ENCODE measurements at regions of chr3 and their contacts with region 1.

Region 1: GRCh38 chr3:49093853-49094767 is at the start of gene QRICH1:
- DNase-seq: peak; percentile 98
- ATAC-seq: peak; percentile 86
- H3K4me3 Mint-ChIP-seq: peak within 1 kb of the TSS; percentile 88
- H3K27ac Mint-ChIP-seq: peak within 1 kb of the TSS; percentile 96
- H3K4me1 Mint-ChIP-seq: peaks cover 28% of the 10 kb centered on the region
- H3K27me3 Mint-ChIP-seq: no peaks in the 10 kb centered on the region
- CTCF ChIP-seq: peak; percentile 63
- total RNA-seq, gene QRICH1: 107 to 112 TPM

Region 2: DNA sequence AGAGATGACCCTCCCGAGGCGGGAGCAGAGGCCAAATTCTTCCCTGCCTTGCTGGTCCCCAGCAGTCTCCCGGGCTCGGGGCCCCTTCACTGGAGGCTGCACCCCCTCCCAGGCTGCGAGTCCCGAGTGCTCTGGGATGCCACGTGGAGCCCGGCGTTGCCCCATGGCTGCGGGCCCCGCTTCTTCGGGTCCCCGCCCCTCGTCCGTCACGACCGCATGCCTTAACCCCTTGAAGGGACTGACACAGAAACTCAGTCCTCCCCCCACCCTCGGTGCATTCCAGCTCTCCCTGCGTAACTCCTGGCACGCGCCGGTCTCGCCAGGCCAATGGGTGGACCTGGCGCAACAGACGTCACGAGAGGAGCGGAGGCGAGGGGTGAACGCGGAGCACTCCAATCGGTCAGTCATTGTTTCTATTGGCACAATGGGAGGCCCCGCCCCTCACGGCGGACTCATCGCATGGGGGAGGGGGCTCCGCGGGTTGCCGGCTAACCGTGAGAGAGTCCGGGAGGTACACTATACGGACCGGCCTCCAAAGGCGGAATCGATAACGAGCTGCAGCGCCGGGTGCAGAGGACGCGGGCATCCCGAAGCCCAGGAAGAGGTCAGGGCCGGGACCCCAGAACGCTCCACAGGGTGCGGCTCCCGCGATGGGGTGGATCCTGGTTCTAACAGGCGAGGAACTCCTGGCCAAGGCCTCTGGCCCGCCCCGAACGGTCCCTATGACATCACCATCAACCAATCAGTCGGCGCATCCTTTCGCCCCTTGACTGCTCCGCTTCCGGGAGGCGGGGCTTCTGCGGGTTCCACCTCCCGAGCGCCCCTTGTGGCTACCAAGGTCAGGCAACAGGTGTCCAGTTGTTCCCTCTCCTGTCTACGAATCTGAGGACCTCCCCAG is 430.4 kb before region 1 on chr3:
- CTCF ChIA-PET with region 1: no interaction called
- POLR2A ChIA-PET with region 1: no interaction called
- intact Hi-C with region 1: no loop called
- DNase-seq: peak; percentile 97
- ATAC-seq: peak; percentile 87
- H3K4me3 Mint-ChIP-seq: peak overlapping the region; percentile 82
- H3K27ac Mint-ChIP-seq: peak overlapping the region; percentile 85
- H3K4me1 Mint-ChIP-seq: peaks cover 17% of the 10 kb centered on the region
- H3K27me3 Mint-ChIP-seq: peaks cover 21% of the 10 kb centered on the region
- CTCF ChIP-seq: peak; percentile 88

Region 3: GRCh38 chr3:49007068-49007770 is 86.9 kb before region 1 on chr3 and contains the start of gene WDR6:
- CTCF ChIA-PET with region 1: interaction called, 11 read pairs
- POLR2A ChIA-PET with region 1: interaction called, 7 read pairs
- intact Hi-C with region 1: no loop called
- DNase-seq: peak; percentile 99
- ATAC-seq: peak; percentile 87
- H3K4me3 Mint-ChIP-seq: peak within 1 kb of the TSS; percentile 91
- H3K27ac Mint-ChIP-seq: peak within 1 kb of the TSS; percentile 98
- H3K4me1 Mint-ChIP-seq: peaks cover 16% of the 10 kb centered on the region
- H3K27me3 Mint-ChIP-seq: no peaks in the 10 kb centered on the region
- CTCF ChIP-seq: no peak
- total RNA-seq, gene WDR6: 111 to 125 TPM

Region 4: DNA sequence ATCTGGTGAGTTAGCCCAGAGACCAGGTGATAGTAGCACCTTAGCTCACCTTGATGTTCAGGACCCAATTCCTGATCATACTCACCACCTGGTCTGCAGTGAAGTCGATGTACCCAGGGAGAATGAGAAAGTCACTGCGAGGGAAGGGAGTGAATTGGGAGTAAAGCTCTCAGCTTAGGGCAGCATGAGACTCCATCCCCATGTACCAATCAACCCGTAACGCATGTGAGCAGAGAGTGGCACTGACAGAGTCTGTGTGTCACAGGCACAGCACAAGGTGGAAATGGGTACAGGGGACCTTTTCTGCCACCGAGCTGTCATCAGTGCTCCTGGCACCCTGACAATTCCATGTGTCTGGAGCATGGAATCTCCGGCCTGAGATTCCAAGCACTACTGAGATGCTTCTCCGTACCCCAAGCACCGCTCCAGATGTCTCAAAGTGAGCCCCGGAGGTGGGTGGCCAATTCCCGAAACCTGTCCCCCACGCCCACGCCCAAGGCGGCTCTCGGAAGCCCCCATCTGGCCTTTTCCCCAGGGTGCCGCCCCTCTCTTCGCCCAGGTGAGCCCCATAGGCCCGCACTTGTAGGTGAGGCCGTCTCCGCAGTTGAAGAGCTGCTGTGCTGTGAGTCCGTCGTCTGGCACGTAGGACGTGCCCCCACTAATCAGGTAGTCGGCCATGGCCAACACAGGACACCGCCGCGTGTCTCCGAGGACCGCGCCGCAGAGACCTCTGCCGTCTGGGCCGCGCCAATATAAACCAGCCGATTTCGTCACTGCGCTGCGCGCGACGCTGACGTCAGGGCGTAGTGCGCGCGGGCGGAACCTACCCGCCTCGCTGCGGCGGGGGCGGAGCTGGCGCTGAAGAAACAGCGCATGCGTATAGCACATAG is 65.2 kb before region 1 on chr3 and contains the start of gene IMPDH2:
- CTCF ChIA-PET with region 1: interaction called, 37 read pairs
- POLR2A ChIA-PET with region 1: interaction called, 21 read pairs
- intact Hi-C with region 1: loop called (anchors 5 kb)
- DNase-seq: peak; percentile 95
- ATAC-seq: peak; percentile 95
- H3K4me3 Mint-ChIP-seq: peak within 1 kb of the TSS; percentile 88
- H3K27ac Mint-ChIP-seq: peak within 1 kb of the TSS; percentile 92
- H3K4me1 Mint-ChIP-seq: peaks cover 43% of the 10 kb centered on the region
- H3K27me3 Mint-ChIP-seq: no peaks in the 10 kb centered on the region
- CTCF ChIP-seq: no peak
- total RNA-seq, gene IMPDH2: 535 to 557 TPM

Region 5: GRCh38 chr3:49104483-49105291 is 10.6 kb after region 1 on chr3 and contains the start of gene QARS1:
- CTCF ChIA-PET with region 1: interaction called, 13 read pairs
- POLR2A ChIA-PET with region 1: interaction called, 54 read pairs
- intact Hi-C with region 1: no loop called
- DNase-seq: peak; percentile 96
- ATAC-seq: peak; percentile 99
- H3K4me3 Mint-ChIP-seq: peak within 1 kb of the TSS; percentile 99
- H3K27ac Mint-ChIP-seq: peak within 1 kb of the TSS; percentile 96
- H3K4me1 Mint-ChIP-seq: peaks cover 21% of the 10 kb centered on the region
- H3K27me3 Mint-ChIP-seq: no peaks in the 10 kb centered on the region
- CTCF ChIP-seq: no peak
- total RNA-seq, gene QARS1: 270 to 282 TPM

Region 6: DNA sequence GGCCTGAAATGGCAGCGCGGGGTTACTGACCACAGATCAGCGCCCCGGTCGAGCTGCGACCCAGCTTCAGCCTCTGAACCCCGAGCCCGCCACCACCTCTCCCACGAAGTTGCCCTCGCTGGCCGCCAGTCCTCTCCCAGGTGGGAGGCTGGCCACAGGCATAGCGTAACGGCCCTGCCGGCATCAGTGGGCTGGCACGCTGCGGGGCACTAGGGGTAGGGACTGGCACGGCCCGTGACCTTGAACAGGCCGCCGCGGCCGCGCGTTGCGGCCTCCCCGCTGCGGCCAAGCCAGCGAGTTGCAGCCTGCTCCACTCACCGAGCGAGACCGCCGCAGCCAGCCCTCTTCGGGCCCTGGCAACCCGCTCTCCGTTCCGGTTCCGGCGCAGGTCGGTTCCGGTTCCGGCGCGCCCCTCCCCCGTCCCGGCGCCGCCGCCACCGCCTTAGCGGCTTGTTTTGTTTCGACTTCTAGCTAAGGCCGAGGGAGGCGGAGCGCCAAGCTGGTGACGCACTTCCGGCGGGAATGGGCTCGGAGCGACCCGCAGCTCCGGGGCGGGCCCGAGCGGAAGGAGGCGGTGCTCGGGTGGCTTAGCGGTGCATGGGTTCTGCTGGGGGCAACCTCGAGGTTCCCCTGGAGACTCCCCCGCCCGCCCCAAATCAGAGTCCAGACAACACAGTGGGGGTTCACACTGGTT is 26.5 kb after region 1 on chr3 and contains the start of gene USP19:
- CTCF ChIA-PET with region 1: interaction called, 16 read pairs
- POLR2A ChIA-PET with region 1: interaction called, 29 read pairs
- intact Hi-C with region 1: no loop called
- DNase-seq: peak; percentile 96
- ATAC-seq: peak; percentile 96
- H3K4me3 Mint-ChIP-seq: peak within 1 kb of the TSS; percentile 87
- H3K27ac Mint-ChIP-seq: peak within 1 kb of the TSS; percentile 93
- H3K4me1 Mint-ChIP-seq: peaks cover 20% of the 10 kb centered on the region
- H3K27me3 Mint-ChIP-seq: no peaks in the 10 kb centered on the region
- CTCF ChIP-seq: no peak
- total RNA-seq, gene USP19: 41.0 to 41.6 TPM

Region 7: DNA sequence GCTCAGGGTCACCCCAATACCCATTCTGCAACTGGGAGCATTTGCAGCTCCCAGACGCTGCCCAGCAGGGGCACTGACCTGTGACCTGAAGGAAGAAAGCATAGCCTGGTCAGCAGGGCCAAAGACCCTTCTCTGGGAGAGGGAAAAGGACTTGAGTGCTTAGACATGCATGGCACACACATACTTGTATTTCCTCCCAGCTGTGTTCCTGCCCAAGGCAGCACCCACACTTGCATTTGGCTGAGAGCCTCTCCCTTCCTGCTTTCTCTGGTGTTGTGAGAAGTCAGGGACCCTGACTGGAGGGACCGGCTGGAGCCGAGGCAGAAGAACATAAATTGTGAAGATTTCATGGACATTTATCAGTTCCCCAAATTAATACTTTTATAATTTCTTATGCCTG is 46.0 kb after region 1 on chr3:
- CTCF ChIA-PET with region 1: no interaction called
- POLR2A ChIA-PET with region 1: no interaction called
- intact Hi-C with region 1: no loop called
- DNase-seq: no peak
- ATAC-seq: no peak
- H3K4me3 Mint-ChIP-seq: no peak overlapping the region
- H3K27ac Mint-ChIP-seq: no peak overlapping the region
- H3K4me1 Mint-ChIP-seq: no peaks in the 10 kb centered on the region
- H3K27me3 Mint-ChIP-seq: peaks cover 3% of the 10 kb centered on the region
- CTCF ChIP-seq: no peak

Measured in activated CD8-positive, alpha-beta T cell treated with anti-CD3 and anti-CD28 coated beads for 36 hours (primary cell).